AG04449 (cell line): ENCODE measurements at regions of chr11 and their contacts with region 1.

Region 1: DNA sequence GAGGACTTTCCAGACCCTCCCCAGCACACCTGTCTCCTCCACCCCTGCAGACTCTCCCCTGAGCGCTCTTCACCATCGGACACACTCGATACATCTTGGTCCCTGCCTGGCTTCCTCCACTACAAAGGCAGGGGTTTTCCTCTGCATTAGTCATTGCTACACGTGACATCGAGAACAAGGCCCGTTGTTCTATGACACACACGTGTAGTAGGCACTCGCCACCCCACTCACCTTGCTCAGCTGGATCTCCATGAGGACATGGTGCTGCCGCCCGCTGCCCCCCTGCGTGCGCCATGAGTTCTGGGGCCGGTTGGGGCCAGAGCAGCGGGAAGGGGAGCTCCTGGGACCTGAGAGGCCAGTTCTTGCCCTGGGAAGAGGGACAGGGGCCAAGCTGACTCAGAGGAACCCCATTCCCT is 16.7 kb downstream of the ATG2A start:
- DNase-seq: no peak
- H3K4me3 ChIP-seq: no peak overlapping the region
- CTCF ChIP-seq: no peak

Region 2: GRCh38 chr11:64887757-64888405 is 12.4 kb before region 1 on chr11:
- CTCF ChIA-PET with region 1: interaction called, 35 read pairs
- POLR2A ChIA-PET with region 1: no interaction called
- DNase-seq: no peak
- H3K4me3 ChIP-seq: peak overlapping the region; percentile 33
- CTCF ChIP-seq: peak; percentile 97